Activated T-helper 2 cell treated with anti-CD3 and anti-CD28 coated beads, Interferon-gamma antibody, Interleukin-2, Interleukin-4, amounts not matched to agents 10 μg/mL and 5 μg/mL and 100 μg/mL, durations not matched to agents 14 hours and 24 hours and 36 hours (primary cell): ENCODE measurements at regions of chrX and their contacts with region 1.

Region 1: DNA sequence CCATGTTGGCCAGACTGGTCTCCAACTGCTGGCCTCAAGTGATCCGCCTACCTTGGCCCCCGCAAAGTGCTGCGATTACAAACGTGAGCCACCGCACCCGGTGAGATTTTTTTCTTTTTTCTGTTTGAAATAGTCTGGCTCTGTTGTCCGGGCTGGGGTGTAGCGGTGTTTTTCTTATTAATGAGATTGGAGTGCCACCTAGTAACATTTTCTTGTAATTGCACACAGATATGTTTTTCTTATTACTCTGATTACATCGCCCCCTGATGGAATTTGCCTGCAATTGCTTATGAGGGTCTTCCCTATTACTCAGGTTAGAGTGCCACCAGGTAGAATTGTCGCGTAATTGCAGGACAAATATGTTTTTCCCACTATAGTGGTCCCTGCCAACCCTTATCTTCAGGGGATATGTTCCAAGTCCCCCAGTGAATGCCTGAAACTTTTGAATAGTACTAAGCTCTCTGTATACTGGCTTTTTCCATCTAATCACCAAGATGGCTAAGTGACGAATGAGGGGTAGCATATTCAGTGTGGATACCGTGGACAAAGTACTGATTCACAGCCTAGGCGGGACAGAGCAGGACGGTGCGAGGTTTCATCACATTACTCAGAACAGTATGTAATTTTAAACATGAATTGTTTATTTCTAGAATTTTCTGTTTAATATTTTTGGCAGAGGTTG is 8.6 kb upstream of the PDHA1 start:
- DNase-seq: no peak
- H3K4me3 Mint-ChIP-seq: no peak overlapping the region
- H3K27ac Mint-ChIP-seq: no peak overlapping the region
- H3K4me1 Mint-ChIP-seq: no peaks in the 10 kb centered on the region
- H3K27me3 Mint-ChIP-seq: peaks cover 1% of the 10 kb centered on the region

Region 2: DNA sequence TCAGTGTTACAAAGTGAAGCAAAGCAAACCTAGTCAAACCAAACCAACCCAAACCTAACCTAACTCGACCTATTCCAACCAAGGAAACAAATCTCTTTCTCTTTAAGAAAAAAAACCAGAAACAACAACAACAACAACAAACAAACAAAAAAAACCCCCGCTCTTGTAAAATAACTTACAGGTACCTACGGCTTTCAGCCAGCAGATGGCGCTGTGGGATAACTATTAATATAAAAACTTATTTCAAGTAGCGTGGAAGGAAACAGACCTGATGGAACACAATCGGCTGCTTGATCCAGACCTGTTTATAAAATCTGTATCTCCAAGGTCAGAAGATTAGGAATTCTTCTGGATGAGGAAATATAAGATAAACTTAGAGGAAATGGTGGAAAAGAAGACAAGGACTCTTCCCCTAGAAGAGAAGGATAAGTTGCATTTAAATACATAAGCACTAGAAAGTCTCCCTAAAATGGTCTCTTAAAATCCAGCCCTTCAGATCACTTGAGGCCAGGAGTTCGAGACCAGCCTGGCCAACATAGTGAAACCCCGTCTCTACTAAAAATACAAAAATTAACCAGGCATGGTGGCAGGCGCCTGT is 944.0 kb before region 1 on chrX:
- intact Hi-C with region 1: loop called (anchors 1 kb)
- DNase-seq: peak; percentile 21
- H3K4me3 Mint-ChIP-seq: no peak overlapping the region
- H3K27ac Mint-ChIP-seq: no peak overlapping the region
- H3K4me1 Mint-ChIP-seq: peaks cover 2% of the 10 kb centered on the region
- H3K27me3 Mint-ChIP-seq: no peaks in the 10 kb centered on the region

Region 3: DNA sequence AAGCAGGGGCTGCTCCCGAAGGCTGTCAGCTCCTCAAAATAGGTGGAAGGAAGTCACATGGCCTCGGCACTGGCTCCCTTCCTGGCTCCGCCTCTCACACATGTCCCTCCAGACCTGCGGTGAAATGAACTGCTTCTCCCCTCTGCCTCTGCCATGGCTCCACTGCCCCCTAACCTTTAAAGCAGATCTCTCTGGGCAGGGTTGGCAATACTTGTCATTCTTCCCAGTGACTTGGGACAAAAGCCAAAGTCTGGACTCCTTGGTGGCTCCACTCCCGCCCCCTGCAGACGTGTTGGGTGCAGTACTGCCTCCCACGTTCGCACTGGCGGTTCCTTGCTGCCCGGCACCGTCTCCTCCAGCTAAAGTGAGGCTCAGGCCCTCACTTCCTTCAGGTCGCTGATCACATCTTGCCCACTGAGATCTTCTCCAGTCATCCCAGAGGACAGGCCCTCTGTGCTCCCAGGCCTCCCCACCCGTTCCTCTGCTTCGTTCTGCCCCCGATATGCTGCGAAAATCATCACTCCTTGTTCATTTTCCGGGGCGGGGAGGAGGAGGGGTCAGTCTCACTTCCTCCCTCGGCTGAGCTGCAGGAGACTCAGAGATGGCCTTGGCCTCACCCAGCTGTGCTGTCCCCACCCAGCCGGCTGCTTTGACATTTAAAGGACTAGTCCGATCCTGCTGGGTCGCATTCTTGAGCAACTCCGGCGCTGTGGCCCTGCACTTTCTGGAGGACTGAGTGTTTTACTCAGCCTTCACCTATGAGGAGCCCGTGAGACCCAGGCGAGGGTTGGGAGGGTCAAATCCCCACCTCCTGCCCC is 448.5 kb before region 1 on chrX:
- intact Hi-C with region 1: loop called (anchors 10 kb)
- DNase-seq: peak; percentile 17
- H3K4me3 Mint-ChIP-seq: peak overlapping the region; percentile 84
- H3K27ac Mint-ChIP-seq: peak overlapping the region; percentile 84
- H3K4me1 Mint-ChIP-seq: peaks cover 18% of the 10 kb centered on the region
- H3K27me3 Mint-ChIP-seq: no peaks in the 10 kb centered on the region

Region 4: GRCh38 chrX:19040373-19040772 is 294.7 kb before region 1 on chrX:
- intact Hi-C with region 1: loop called (anchors 5 kb)
- DNase-seq: no peak
- H3K4me3 Mint-ChIP-seq: no peak overlapping the region
- H3K27ac Mint-ChIP-seq: no peak overlapping the region
- H3K4me1 Mint-ChIP-seq: no peaks in the 10 kb centered on the region
- H3K27me3 Mint-ChIP-seq: no peaks in the 10 kb centered on the region